ENCODE measurements at regions of chr10 and their contacts with region 1.

Region 1: GRCh38 chr10:128035557-128035973 is 90.7 kb downstream of the MKI67 start:
- DNase-seq: peak; percentile 32
- H3K4me3 ChIP-seq: no peak overlapping the region
- H3K27ac ChIP-seq: no peak overlapping the region
- H3K4me1 ChIP-seq: peaks cover 8% of the 10 kb centered on the region
- H3K27me3 ChIP-seq: no peaks in the 10 kb centered on the region
- CTCF ChIP-seq: peak; percentile 84 to 97

Region 2: GRCh38 chr10:128064108-128064969 is 28.8 kb after region 1 on chr10:
- CTCF ChIA-PET with region 1: interaction called, 15 read pairs
- dilution Hi-C with region 1: no loop called
- in situ Hi-C with region 1: no loop called
- intact Hi-C with region 1: loop called (anchors 1 kb)
- DNase-seq: peak; percentile 97
- H3K4me3 ChIP-seq: no peak overlapping the region
- H3K27ac ChIP-seq: peak overlapping the region; percentile 97
- H3K4me1 ChIP-seq: peaks cover 46% of the 10 kb centered on the region
- H3K27me3 ChIP-seq: no peaks in the 10 kb centered on the region
- CTCF ChIP-seq: no peak

Region 3: DNA sequence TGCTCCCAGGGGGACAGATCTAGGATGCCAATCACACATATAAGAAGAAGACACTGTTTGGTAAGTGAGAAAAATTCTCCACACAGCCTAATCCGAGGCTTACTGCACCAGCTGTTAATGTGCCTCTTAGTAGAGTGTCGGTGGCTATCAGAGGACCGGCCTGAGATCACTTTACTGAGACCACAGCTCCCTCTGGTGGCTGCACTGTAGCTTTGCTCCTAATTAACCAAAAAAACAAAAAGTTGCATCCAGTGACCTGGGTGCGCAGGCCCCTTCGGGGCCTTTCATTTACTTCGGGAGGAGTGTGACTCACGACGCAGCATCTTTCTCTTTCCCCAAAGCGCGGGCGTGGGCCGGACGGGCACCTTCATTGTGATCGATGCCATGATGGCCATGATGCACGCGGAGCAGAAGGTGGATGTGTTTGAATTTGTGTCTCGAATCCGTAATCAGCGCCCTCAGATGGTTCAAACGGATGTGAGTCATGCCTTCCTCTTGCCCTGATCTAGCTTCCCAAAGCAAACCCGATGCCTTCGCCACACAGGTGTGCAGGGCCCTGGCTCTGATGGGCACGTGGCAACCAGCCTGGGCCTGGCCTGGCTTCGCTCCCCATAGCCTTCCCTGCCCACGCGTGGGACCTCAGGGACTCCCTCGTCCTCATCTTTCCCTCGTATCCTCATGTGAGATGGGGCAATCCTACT is 33.9 kb after region 1 on chr10:
- CTCF ChIA-PET with region 1: interaction called, 15 read pairs
- dilution Hi-C with region 1: no loop called
- in situ Hi-C with region 1: no loop called
- intact Hi-C with region 1: loop called (anchors 1 kb)
- DNase-seq: peak; percentile 85
- H3K4me3 ChIP-seq: no peak overlapping the region
- H3K27ac ChIP-seq: no peak overlapping the region
- H3K4me1 ChIP-seq: peaks cover 33% of the 10 kb centered on the region
- H3K27me3 ChIP-seq: no peaks in the 10 kb centered on the region
- CTCF ChIP-seq: peak; percentile 74 to 84

Region 4: DNA sequence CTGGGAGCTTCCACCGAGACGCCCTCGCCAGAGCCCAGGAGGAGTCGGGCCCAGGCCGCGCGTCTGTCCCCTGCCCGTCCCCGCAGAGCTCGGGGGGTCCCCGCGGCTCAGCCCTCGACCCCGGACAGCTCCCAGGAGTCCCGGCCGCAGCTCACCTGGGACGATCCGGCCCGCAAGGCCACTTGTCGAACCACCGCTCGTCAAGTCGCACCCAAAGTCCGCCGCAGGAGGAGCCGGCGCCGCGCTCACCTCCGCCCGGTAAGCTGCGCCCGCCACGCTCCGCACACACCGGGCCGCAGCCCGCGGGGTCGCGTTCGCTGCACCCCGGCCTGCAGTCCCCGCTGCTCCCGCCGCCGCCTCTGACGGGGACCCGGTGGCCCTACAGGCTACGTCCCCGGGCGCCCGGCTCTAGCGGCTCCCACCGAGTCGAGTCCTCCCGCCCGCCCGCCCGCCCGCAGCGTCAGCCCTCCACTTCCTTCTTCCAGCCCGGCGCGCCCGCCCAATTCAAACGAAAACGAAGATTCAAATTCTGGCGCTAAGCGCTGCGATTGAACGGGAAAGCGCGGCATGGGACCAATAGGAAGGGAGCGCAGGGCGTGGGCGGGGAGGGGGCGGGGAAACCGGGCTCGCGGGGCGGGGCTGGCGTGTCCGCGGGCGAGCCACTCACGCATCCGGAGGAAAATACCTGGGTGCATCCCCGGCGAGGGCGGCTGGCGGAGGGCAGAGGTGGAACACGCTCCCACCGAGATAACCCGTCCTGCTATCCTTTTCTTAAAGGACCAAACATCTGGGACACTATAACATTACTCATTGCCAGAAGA is 90.6 kb after region 1 on chr10 and contains the start of gene MKI67:
- CTCF ChIA-PET with region 1: no interaction called
- dilution Hi-C with region 1: loop called (anchors 5 kb)
- in situ Hi-C with region 1: no loop called
- intact Hi-C with region 1: no loop called
- DNase-seq: peak; percentile 93
- H3K4me3 ChIP-seq: peak within 1 kb of the TSS; percentile 83 to 88 (median 87)
- H3K27ac ChIP-seq: peak within 1 kb of the TSS; percentile 68
- H3K4me1 ChIP-seq: peaks cover 26% of the 10 kb centered on the region
- H3K27me3 ChIP-seq: no peaks in the 10 kb centered on the region
- CTCF ChIP-seq: no peak
- total RNA-seq, gene MKI67: 1.3 to 88.5 TPM

Measured in mammary epithelial cell (primary cell).